Spleen (tissue), 13 donors: ENCODE measurements at regions of chr9 and their contacts with region 1.

Region 1: GRCh38 chr9:127503947-127504782 is 52.9 kb downstream of the LRSAM1 start:
- DNase-seq: peak; percentile 94
- H3K4me3 ChIP-seq: no peak overlapping the region
- H3K27ac ChIP-seq: peak overlapping the region in 2 of 8 donors; percentile 17 to 31
- H3K4me1 ChIP-seq: peaks cover 0 to 24% (median 8%) of the 10 kb centered on the region in 6 donors
- H3K27me3 ChIP-seq: no peaks in the 10 kb centered on the region
- CTCF ChIP-seq: peak; percentile 72 to 91 (median 88)
- POLR2A ChIP-seq: no peak

Region 2: GRCh38 chr9:127187231-127187956 is 316.8 kb before region 1 on chr9:
- intact Hi-C with region 1: no loop called
- DNase-seq: peak; percentile 35
- H3K4me3 ChIP-seq: no peak overlapping the region
- H3K27ac ChIP-seq: peak overlapping the region in 7 of 8 donors; percentile 54 to 77 (median 69)
- H3K4me1 ChIP-seq: peaks cover 0 to 37% (median 14%) of the 10 kb centered on the region in 6 donors
- H3K27me3 ChIP-seq: no peaks in the 10 kb centered on the region
- CTCF ChIP-seq: no peak
- POLR2A ChIP-seq: no peak

Region 3: GRCh38 chr9:127586537-127586936 is 82.4 kb after region 1 on chr9:
- intact Hi-C with region 1: loop called (anchors 5 kb)
- DNase-seq: peak; percentile 80
- H3K4me3 ChIP-seq: no peak overlapping the region
- H3K27ac ChIP-seq: no peak overlapping the region
- H3K4me1 ChIP-seq: peaks cover 0 to 18% (median 10%) of the 10 kb centered on the region in 6 donors
- H3K27me3 ChIP-seq: peaks cover 0 to 36% (median 0%) of the 10 kb centered on the region in 7 donors
- CTCF ChIP-seq: peak; percentile 55 to 91 (median 80)
- POLR2A ChIP-seq: no peak

Region 4: DNA sequence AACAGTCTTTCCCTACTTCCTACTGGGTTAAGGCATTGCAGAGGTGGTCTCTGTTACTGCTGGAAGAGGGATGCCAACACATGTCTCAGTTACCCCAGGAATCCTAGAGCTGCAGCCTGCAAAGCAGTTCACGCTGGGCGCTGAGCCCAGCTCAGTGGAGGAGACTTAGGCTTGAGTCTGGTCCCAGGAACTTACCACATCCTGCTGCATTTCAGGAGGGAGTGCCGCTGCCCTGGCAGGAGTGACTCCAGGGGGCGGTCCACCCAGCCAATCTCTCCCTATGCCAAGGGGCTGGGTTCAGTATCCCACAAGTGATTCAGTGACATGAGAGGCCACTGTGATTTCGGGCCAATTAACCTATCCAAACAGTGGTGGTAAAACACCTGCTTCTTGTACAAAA is 219.3 kb after region 1 on chr9:
- intact Hi-C with region 1: loop called (anchors 10 kb)
- DNase-seq: no peak
- H3K4me3 ChIP-seq: no peak overlapping the region
- H3K27ac ChIP-seq: no peak overlapping the region
- H3K4me1 ChIP-seq: peaks cover 0 to 28% (median 6%) of the 10 kb centered on the region in 6 donors
- H3K27me3 ChIP-seq: peaks cover 0 to 2% (median 0%) of the 10 kb centered on the region in 7 donors
- CTCF ChIP-seq: no peak
- POLR2A ChIP-seq: no peak

Region 5: GRCh38 chr9:127921557-127922120 is 417.5 kb after region 1 on chr9:
- intact Hi-C with region 1: loop called (anchors 5 kb)
- DNase-seq: peak; percentile 94
- H3K4me3 ChIP-seq: peak overlapping the region in 3 of 8 donors; percentile 9 to 54 (median 26)
- H3K27ac ChIP-seq: no peak overlapping the region
- H3K4me1 ChIP-seq: peaks cover 40 to 65% (median 49%) of the 10 kb centered on the region in 6 donors
- H3K27me3 ChIP-seq: peaks cover 0 to 36% (median 5%) of the 10 kb centered on the region in 7 donors
- CTCF ChIP-seq: peak; percentile 96 to 100 (median 99)
- POLR2A ChIP-seq: no peak